ENCODE measurements at regions of chr15 and their contacts with region 1.

Region 1: GRCh38 chr15:48415036-48415886 is 84.0 kb downstream of the DUT start:
- DNase-seq: peak in 1 of 2 experiments; percentile 16
- H3K4me3 ChIP-seq: no peak overlapping the region
- H3K27ac ChIP-seq: no peak overlapping the region
- H3K4me1 ChIP-seq: no peaks in the 10 kb centered on the region
- H3K27me3 ChIP-seq: no peaks in the 10 kb centered on the region
- CTCF ChIP-seq: no peak

Region 2: DNA sequence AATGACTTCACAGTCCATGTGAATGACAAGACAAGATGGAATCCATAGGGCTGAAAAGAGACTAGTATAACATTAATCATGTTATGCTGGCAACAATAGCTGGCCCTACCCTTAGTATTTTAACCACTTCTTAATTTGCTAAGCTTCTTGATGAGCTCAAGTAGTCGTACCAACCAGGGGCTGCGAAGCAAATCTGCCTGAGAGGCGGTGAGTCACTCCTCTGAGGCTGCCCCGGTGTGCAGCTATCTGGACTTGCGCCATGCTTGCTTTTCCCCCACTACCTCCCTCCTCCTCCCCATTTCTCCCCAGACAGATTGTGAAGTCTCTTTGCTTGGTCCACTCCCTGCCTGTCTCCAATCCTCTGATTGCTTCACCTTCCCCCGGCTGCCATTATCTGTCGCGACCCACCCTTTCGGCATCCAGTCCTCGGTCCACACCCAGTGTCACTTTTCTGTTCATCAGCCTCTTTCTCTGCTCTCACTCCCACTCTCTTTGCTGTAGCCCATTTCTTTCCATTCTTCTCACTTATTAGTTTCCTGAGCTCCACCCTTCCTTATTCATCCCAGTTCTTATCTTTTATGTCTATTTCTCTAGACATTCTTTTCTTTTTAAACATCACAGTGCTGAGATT is 41.3 kb before region 1 on chr15:
- CTCF ChIA-PET with region 1: no interaction called
- POLR2A ChIA-PET with region 1: no interaction called
- intact Hi-C with region 1: loop called (anchors 5 kb)
- DNase-seq: peak in 1 of 2 experiments; percentile 59
- H3K4me3 ChIP-seq: no peak overlapping the region
- H3K27ac ChIP-seq: no peak overlapping the region
- H3K4me1 ChIP-seq: peaks cover 14% of the 10 kb centered on the region; the same call in 1 of the 2 replicates
- H3K27me3 ChIP-seq: no peaks in the 10 kb centered on the region
- CTCF ChIP-seq: no peak

Measured in PC-9 (cell line).